HepG2 (cell line): ENCODE measurements at regions of chr14 and their contacts with region 1.

Region 1: DNA sequence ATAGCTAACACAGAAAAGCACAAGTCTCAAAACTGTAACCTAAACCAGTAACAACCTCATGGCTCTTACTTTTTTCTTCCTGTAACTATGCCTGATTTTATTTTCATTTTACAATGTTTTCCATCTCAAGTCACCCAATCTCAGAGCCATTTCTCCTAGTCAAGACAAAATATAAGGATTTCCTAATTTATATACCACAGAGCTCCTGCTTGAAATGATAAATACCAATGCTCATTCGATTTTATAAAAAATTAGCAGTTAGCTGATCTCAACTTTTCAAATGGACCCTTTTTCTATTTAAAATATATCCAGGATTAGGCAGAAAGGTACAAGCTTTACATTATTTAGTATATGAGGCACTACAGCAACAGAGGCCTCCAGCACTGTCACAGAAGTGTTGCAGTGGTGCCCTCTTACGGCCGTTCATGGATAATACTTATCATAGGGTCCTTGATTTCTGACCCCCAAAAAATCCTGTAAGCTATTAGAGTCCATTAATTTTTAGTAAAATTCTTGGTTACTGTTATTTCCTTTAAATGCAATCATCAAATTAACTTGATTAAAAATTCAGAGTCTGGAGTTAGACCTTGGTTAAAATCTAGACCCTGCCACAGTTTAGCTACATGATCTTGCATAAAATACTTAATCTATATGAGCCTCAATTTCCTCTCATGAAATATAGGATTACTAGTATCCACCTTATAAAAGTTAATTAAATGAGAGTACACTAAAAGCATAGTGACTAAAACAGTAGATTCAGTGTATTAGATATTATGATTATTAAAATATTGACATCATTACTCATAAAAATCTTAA is 68.3 kb downstream of the SEC23A start:
- DNase-seq: peak; percentile 66
- ATAC-seq: peak; percentile 78
- H3K4me3 ChIP-seq: no peak overlapping the region
- H3K27ac ChIP-seq: no peak overlapping the region
- H3K4me1 ChIP-seq: no peaks in the 10 kb centered on the region
- H3K27me3 ChIP-seq: no peaks in the 10 kb centered on the region
- CTCF ChIP-seq: peak; percentile 75
- EP300 ChIP-seq: no peak
- POLR2A ChIP-seq: no peak
- RAD21 ChIP-seq: peak; percentile 66; the same call in 1 of the 2 replicates

Region 2: DNA sequence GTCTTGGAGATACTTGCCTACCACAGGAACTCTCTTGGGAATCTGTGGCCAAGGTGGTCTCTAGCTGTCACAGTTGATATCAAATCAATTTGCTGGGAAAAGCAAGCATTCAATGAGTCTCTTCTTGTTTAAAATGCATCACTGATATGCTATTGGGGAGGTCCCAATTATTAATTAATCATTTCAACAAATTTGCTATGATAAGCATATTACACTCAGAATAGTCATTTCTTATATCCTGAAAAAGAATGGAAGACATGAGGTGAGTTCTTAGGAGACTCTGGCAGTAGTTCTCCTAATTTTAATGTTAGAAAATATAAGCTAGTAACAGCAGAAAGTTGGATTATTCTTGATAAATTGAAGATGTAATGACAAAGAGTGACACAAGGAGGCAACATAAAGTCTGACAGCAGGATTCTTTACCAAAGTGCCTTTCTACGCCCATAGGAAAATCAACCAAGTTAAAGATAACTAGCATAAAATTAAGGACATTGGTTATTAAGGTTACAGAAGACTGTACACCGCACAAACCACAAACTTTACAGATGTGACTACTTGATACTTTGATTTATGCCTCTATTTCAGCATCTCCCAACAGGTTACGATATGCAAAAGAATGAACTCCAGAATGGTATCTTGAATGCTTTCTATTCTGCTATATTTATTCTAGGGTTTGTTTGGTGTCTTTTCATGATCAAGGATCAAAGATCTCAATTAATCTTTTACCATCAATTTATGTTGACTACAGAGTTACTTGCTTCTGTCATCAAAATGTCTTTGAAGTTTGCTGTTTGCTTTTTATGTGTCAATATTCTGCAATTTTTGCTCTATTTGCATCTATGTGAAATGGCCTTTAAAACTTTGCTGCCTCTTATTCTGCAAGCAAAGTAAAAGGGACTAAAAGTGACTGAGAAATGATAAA is 429.2 kb before region 1 on chr14:
- CTCF ChIA-PET with region 1: no interaction called
- POLR2A ChIA-PET with region 1: no interaction called
- in situ Hi-C with region 1: no loop called
- intact Hi-C with region 1: loop called (anchors 1 kb)
- DNase-seq: peak; percentile 79
- ATAC-seq: peak; percentile 83
- H3K4me3 ChIP-seq: peak overlapping the region in 2 of 3 experiments; percentile 1 to 11; a peak in 2 of 6 replicates
- H3K27ac ChIP-seq: peak overlapping the region; percentile 14
- H3K4me1 ChIP-seq: peaks cover 24% of the 10 kb centered on the region
- H3K27me3 ChIP-seq: no peaks in the 10 kb centered on the region
- CTCF ChIP-seq: peak; percentile 56
- EP300 ChIP-seq: peak in 1 of 2 experiments; percentile 92; a peak in 2 of 4 replicates
- POLR2A ChIP-seq: no peak
- RAD21 ChIP-seq: peak; percentile 10; the same call in 1 of the 2 replicates

Region 3: GRCh38 chr14:38721822-38722431 is 312.8 kb before region 1 on chr14:
- CTCF ChIA-PET with region 1: interaction called, 18 read pairs
- POLR2A ChIA-PET with region 1: no interaction called
- in situ Hi-C with region 1: no loop called
- intact Hi-C with region 1: loop called (anchors 1 kb)
- DNase-seq: peak; percentile 77
- ATAC-seq: peak; percentile 98
- H3K4me3 ChIP-seq: no peak overlapping the region
- H3K27ac ChIP-seq: no peak overlapping the region
- H3K4me1 ChIP-seq: no peaks in the 10 kb centered on the region
- H3K27me3 ChIP-seq: no peaks in the 10 kb centered on the region
- CTCF ChIP-seq: peak; percentile 94
- EP300 ChIP-seq: no peak; a peak in 1 of 4 replicates
- POLR2A ChIP-seq: no peak
- RAD21 ChIP-seq: peak; percentile 79

Region 4: DNA sequence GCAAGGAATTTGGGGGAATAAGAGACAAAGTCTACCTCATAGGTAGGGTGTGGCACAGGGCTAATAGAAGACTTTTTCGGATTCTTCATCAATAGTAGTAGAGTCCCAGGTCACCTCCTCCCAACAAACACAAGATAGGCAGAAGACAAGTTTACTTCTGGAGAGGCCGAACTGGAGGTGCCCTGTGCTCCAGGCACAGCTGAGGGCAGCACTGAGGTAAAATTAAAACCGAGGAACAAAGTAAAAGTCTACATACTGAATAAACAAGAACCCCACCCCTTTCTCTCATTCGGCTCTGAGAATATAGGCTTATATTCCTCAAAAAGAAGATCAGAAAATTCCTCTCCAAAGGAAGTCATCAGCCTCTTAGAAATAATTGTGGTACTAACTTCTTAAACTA is 93.2 kb before region 1 on chr14:
- CTCF ChIA-PET with region 1: no interaction called
- POLR2A ChIA-PET with region 1: no interaction called
- in situ Hi-C with region 1: no loop called
- intact Hi-C with region 1: loop called (anchors 1 kb)
- DNase-seq: peak; percentile 38
- ATAC-seq: peak; percentile 79
- H3K4me3 ChIP-seq: no peak overlapping the region
- H3K27ac ChIP-seq: no peak overlapping the region
- H3K4me1 ChIP-seq: no peaks in the 10 kb centered on the region
- H3K27me3 ChIP-seq: no peaks in the 10 kb centered on the region
- CTCF ChIP-seq: peak; percentile 20; the same call in 1 of the 2 replicates
- EP300 ChIP-seq: no peak
- POLR2A ChIP-seq: no peak
- RAD21 ChIP-seq: no peak

Region 5: DNA sequence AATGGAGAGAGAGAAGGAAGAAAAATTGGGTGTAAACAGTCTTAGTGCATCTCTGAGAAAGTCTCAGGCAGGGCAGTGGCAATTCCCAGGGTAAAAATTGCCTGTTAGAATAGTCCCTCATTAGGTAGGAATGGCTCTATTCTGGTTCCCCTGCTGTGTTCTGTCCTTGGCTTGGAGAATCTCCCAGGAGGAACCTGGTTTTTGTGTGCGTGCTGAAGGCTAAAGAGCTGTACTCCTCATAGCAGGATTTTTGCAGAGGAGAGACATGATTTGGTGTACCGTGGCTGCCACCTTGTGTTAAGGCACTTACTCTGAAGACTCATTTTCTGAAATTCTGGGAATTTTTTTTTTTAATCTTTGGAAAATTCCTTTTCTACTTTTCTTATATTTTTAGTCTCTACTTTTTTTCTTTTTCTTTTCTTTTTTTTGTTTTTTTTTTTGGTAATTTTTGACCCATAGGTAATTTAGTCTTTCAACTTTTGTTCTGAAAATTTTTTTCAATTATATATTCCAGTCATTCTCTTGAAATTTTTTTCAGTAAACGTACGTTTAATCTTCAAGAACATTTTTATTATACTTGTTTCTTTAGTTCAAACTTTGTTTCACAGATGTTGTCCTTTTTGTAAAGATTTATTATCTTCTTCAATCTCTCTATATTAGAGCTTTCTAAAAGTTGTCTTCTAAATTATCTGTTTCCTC is 333.7 kb after region 1 on chr14:
- CTCF ChIA-PET with region 1: no interaction called
- POLR2A ChIA-PET with region 1: no interaction called
- in situ Hi-C with region 1: no loop called
- intact Hi-C with region 1: loop called (anchors 1 kb)
- DNase-seq: peak; percentile 88
- ATAC-seq: peak; percentile 77
- H3K4me3 ChIP-seq: no peak overlapping the region
- H3K27ac ChIP-seq: no peak overlapping the region
- H3K4me1 ChIP-seq: peaks cover 5% of the 10 kb centered on the region; the same call in 1 of the 2 replicates
- H3K27me3 ChIP-seq: no peaks in the 10 kb centered on the region
- CTCF ChIP-seq: peak; percentile 82
- EP300 ChIP-seq: no peak
- POLR2A ChIP-seq: no peak
- RAD21 ChIP-seq: peak; percentile 86